A549 (cell line): ENCODE measurements at regions of chr19 and their contacts with region 1.

Region 1: GRCh38 chr19:48842789-48843162 is 6.5 kb upstream of the HSD17B14 start:
- DNase-seq: peak; percentile 48 to 71
- ATAC-seq: peak; percentile 75 to 82
- H3K4me3 ChIP-seq: no peak overlapping the region
- H3K27ac ChIP-seq: no peak overlapping the region
- H3K4me1 ChIP-seq: 0 out of 3 replicates have a peak, but pooled peaks cover under 1% of the 10 kb centered on the region
- CTCF ChIP-seq: peak; percentile 97
- EP300 ChIP-seq: no peak
- POLR2A ChIP-seq: no peak
- RAD21 ChIP-seq: peak; percentile 86 to 89

Region 2: DNA sequence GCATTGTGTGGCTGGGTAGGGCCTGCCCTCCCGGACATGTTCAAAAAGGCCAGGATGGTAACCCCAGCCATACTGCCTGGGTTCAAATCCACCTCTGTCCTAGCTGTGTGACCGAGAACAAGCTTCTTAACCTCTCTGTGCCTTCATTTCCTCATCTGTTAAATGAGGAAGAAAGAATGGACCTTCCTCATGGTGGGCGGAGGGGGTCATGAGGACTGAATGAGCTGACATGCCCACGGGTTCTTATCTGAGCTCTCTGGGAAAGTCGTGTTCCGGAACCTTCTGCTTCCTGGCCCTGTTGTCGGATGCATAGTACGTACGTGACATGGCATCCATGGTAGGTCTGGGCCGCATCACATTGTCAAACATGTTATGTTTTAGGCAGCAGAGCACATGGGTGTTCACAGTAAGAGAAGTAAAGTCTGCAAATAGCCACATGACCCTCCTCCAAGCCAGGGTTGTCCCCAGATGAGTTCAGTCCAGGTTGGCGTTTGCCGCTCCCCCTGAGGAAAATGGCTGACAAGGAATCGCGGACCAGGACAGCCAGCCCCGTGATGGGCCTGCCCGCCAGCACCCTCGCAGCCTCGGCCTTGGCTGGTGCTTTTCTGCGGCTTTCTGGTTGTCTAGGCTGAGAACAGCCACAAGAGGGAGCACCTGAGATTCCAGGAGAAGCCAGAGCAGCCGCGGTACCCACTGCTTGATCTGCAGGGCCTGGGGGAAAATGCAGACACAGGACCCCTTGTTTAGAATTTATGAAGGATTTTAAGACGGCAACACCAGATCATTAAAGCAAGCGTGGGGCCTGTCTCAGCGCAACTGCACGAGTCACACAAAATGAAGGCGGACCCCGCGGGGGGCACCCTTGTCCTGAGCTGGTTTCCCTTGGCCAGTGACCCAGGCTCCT is 167.6 kb before region 1 on chr19:
- CTCF ChIA-PET with region 1: interaction called, 27 read pairs
- POLR2A ChIA-PET with region 1: no interaction called
- DNase-seq: peak; percentile 90 to 98
- ATAC-seq: peak; percentile 80 to 95
- H3K4me3 ChIP-seq: no peak overlapping the region
- H3K27ac ChIP-seq: peak overlapping the region; percentile 38 to 65; a peak in 5 of 6 replicates
- H3K4me1 ChIP-seq: peaks cover 5% of the 10 kb centered on the region; the same call in 1 of the 3 replicates
- CTCF ChIP-seq: peak; percentile 95
- EP300 ChIP-seq: no peak
- POLR2A ChIP-seq: no peak
- RAD21 ChIP-seq: peak; percentile 78 to 81

Region 3: DNA sequence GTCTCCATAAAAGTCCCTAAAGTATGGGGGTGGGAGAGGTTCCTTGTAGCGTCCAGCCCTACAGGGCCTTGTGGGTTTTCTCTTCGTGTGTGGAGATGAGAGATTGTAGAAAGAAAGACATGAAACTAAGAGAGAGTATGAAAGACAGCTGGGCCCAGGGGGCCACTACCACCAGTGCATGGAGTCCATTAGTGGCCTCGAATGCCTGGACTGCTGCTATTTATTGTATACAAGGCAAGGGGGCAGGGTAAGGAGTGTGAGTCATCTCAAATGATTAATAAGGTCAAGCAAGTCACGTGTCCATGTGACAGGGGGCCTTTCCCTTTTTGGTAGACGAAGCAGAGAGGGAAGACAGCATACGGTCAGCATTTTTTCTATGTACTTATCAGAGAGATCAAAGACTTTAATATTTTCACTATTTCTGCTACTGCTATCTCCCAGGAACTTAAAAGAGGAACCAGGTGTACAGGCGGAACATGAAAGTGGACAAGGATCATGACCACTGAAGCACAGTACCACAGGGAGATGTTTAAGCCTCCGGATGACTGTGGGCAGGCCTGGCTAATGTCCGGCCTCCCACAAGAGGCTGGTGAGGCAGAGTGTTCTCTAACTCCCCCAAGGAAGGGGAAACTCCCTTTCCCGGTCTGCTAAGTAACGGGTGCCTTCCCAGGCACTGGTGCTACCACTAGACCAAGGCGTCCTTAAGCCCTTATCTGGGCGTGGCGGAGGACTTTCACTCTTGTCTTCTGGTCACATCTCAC is 62.0 kb before region 1 on chr19:
- CTCF ChIA-PET with region 1: interaction called, 927 read pairs
- POLR2A ChIA-PET with region 1: interaction called, 5 read pairs
- DNase-seq: peak in 1 of 2 experiments; percentile 62
- ATAC-seq: peak in 1 of 2 experiments; percentile 13; a peak in 3 of 6 replicates
- H3K4me3 ChIP-seq: no peak overlapping the region
- H3K27ac ChIP-seq: 0 out of 6 replicates have a peak overlapping the region, but pooled peaks of 1 of the 2 experiments have one; percentile 29
- H3K4me1 ChIP-seq: peaks cover 10% of the 10 kb centered on the region
- CTCF ChIP-seq: no peak
- EP300 ChIP-seq: no peak
- POLR2A ChIP-seq: no peak
- RAD21 ChIP-seq: no peak

Region 4: GRCh38 chr19:48819366-48819816 is 23.4 kb before region 1 on chr19:
- CTCF ChIA-PET with region 1: interaction called, 70 read pairs
- POLR2A ChIA-PET with region 1: interaction called, 3 read pairs
- DNase-seq: peak in 1 of 2 experiments; percentile 89
- ATAC-seq: peak; percentile 77 to 86
- H3K4me3 ChIP-seq: no peak overlapping the region
- H3K27ac ChIP-seq: peak overlapping the region; percentile 52 to 78; a peak in 5 of 6 replicates
- H3K4me1 ChIP-seq: peaks cover 33% of the 10 kb centered on the region
- CTCF ChIP-seq: no peak
- EP300 ChIP-seq: peak in 1 of 2 experiments; percentile 47; a peak in 1 of 5 replicates
- POLR2A ChIP-seq: no peak
- RAD21 ChIP-seq: no peak

Region 5: GRCh38 chr19:48872182-48872883 is 29.6 kb after region 1 on chr19 and contains the start of gene PPP1R15A:
- CTCF ChIA-PET with region 1: interaction called, 33 read pairs
- POLR2A ChIA-PET with region 1: interaction called, 17 read pairs
- DNase-seq: peak; percentile 98 to 100
- ATAC-seq: peak; percentile 55 to 58
- H3K4me3 ChIP-seq: peak within 1 kb of the TSS; percentile 92
- H3K27ac ChIP-seq: peak within 1 kb of the TSS; percentile 95 to 97
- H3K4me1 ChIP-seq: peaks cover 40% of the 10 kb centered on the region
- CTCF ChIP-seq: no peak
- EP300 ChIP-seq: no peak
- POLR2A ChIP-seq: peak; percentile 99
- RAD21 ChIP-seq: no peak; a peak in 1 of 5 replicates
- polyA plus RNA-seq, gene PPP1R15A: 49.0 and 74.2 TPM in 2 replicates

Region 6: DNA sequence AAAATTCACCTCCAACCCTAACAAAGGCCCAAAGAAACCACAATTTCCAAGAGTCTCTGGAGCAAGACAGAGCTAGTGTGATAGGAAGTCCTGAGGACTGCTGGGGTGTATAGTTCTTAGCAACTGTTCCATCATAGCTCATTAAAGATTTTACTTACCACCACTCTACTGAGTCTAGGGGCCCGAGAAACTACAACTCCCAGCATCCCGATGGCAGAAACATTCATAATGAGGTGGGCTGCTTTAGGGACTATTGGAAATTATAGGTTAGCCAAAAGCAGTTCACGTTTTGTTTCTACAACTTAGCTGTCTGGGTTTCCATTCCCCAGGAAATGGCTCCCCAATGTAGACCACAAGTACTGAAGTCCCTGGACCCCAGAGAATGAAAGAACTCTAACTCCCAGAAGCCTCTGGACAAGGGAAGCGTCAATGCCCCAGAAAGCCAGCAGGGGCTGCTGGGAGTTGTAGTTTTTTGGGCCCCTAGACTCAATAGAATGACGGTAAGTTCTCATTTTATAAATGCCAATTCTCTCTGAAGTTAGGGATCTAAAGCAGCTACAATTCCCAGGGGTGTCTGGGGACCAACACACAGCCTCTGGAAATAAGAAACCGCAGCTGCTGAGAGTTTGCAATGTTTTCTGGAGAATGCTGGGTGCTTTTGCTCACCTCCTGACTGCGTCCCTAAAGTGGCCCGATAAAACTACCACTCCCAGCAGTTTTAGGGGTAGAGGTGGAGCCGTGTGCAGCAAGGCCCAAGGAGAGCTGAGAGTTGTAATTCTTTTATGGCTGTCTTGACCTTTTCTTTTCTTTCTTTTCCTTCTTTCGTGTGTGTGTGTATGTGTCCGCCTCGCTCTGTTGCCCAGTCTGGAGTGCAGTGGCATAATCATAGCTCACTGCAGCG is 133.4 kb after region 1 on chr19:
- CTCF ChIA-PET with region 1: interaction called, 114 read pairs
- POLR2A ChIA-PET with region 1: interaction called, 4 read pairs
- DNase-seq: peak in 1 of 2 experiments; percentile 47
- ATAC-seq: peak; percentile 46 to 72; a peak in 5 of 6 replicates
- H3K4me3 ChIP-seq: no peak overlapping the region
- H3K27ac ChIP-seq: no peak overlapping the region
- H3K4me1 ChIP-seq: peaks cover 13% of the 10 kb centered on the region
- CTCF ChIP-seq: no peak
- EP300 ChIP-seq: no peak
- POLR2A ChIP-seq: no peak
- RAD21 ChIP-seq: no peak